Activated CD4-positive, alpha-beta T cell treated with anti-CD3 and anti-CD28 coated beads for 36 hours (primary cell): ENCODE measurements at regions of chr10 and their contacts with region 1.

Region 1: DNA sequence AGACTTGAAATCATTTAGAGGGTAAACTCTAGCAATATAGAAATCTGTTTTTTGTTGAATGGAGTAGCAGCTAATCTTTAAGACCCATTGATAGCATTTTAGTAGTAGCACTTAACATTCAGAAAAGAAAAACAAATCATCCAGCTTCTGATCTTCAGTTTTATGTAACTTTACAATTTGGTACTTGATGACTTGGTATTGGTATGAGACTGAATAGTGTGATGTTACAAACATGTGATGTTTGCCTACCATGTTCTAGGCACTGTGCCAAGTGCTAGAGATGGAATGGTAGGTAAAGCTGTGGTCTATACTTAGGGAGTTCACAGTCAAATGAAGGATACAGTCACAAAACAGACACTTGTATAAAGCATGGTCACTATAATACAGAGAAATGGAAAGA is 21.3 kb downstream of the ZEB1 start:
- DNase-seq: peak; percentile 52
- ATAC-seq: peak; percentile 45
- H3K4me3 Mint-ChIP-seq: no peak overlapping the region
- H3K27ac Mint-ChIP-seq: no peak overlapping the region
- H3K4me1 Mint-ChIP-seq: peaks cover 22% of the 10 kb centered on the region
- H3K27me3 Mint-ChIP-seq: no peaks in the 10 kb centered on the region

Region 2: GRCh38 chr10:30701451-30702173 is 638.7 kb before region 1 on chr10:
- CTCF ChIA-PET with region 1: interaction called, 3 read pairs
- POLR2A ChIA-PET with region 1: no interaction called
- intact Hi-C with region 1: loop called (anchors 5 to 10 kb)
- DNase-seq: peak; percentile 93
- ATAC-seq: peak; percentile 73
- H3K4me3 Mint-ChIP-seq: peak overlapping the region; percentile 86
- H3K27ac Mint-ChIP-seq: peak overlapping the region; percentile 90
- H3K4me1 Mint-ChIP-seq: peaks cover 87% of the 10 kb centered on the region
- H3K27me3 Mint-ChIP-seq: no peaks in the 10 kb centered on the region

Region 3: DNA sequence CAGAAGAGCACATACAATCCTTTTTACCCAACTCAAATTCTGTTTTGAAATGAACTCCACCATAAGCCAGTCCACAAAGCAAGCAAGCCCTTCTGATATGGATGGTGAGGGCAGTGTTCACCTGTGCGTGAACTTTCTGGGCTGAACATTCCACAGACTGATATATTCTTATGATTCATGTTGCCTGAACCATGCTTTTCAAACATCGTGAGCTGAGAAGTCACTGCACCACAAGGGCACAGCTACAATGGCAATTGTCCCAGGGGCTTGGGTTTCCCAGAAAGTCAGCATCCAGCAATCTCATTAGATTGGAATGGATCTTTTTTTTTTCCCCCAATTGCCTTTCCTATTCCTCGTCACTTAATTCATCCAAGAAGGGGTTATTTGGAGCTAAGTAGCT is 221.8 kb before region 1 on chr10:
- CTCF ChIA-PET with region 1: no interaction called
- POLR2A ChIA-PET with region 1: no interaction called
- intact Hi-C with region 1: no loop called
- DNase-seq: no peak
- ATAC-seq: no peak
- H3K4me3 Mint-ChIP-seq: no peak overlapping the region
- H3K27ac Mint-ChIP-seq: no peak overlapping the region
- H3K4me1 Mint-ChIP-seq: peaks cover 19% of the 10 kb centered on the region
- H3K27me3 Mint-ChIP-seq: peaks cover 2% of the 10 kb centered on the region

Region 4: DNA sequence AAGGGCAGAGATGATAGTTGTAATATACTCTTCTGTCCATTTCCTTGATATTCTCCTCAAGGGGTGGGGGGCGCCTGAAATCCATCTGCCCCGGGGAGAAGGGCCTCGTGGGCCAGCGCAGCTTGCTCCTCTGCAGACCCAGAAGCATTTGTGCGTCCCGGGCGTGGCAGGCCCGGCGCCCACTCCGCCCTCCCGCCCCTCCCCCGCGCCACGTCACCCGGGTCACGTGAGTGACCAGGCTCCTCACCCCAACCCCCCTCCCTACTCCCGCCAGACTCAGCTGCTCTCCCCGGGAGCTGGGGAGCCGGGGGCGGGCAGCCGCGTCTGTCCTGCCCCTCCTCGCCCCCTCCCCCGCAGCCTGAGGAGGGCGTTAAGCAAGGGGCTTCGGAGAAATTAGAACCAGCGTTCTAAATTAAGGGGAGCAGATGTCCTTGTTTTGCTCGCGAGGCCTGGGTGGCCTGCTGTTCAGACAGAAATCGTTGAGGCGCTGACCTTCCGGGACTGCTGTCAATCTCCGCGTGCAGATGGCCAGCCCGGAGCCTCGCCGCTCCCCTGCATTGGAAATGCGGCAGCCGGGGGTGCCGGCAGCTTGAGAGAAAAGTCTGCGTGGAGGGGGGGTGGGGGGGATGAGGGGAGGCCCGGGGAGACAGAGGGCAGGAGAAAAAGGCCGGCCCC is 206.6 kb before region 1 on chr10:
- CTCF ChIA-PET with region 1: no interaction called
- POLR2A ChIA-PET with region 1: no interaction called
- intact Hi-C with region 1: loop called in 1 of 2 experiments (anchors 10 kb)
- DNase-seq: peak; percentile 84
- ATAC-seq: peak; percentile 52
- H3K4me3 Mint-ChIP-seq: peak overlapping the region; percentile 75
- H3K27ac Mint-ChIP-seq: peak overlapping the region; percentile 55
- H3K4me1 Mint-ChIP-seq: peaks cover 42% of the 10 kb centered on the region
- H3K27me3 Mint-ChIP-seq: no peaks in the 10 kb centered on the region

Region 5: GRCh38 chr10:31393844-31394243 is 53.5 kb after region 1 on chr10:
- CTCF ChIA-PET with region 1: interaction called, 3 read pairs
- POLR2A ChIA-PET with region 1: no interaction called
- intact Hi-C with region 1: loop called in 1 of 2 experiments (anchors 5 kb)
- DNase-seq: no peak
- ATAC-seq: no peak
- H3K4me3 Mint-ChIP-seq: no peak overlapping the region
- H3K27ac Mint-ChIP-seq: no peak overlapping the region
- H3K4me1 Mint-ChIP-seq: peaks cover 36% of the 10 kb centered on the region
- H3K27me3 Mint-ChIP-seq: no peaks in the 10 kb centered on the region

Region 6: GRCh38 chr10:31479752-31480151 is 139.4 kb after region 1 on chr10:
- CTCF ChIA-PET with region 1: no interaction called
- POLR2A ChIA-PET with region 1: no interaction called
- intact Hi-C with region 1: no loop called
- DNase-seq: no peak
- ATAC-seq: no peak
- H3K4me3 Mint-ChIP-seq: no peak overlapping the region
- H3K27ac Mint-ChIP-seq: no peak overlapping the region
- H3K4me1 Mint-ChIP-seq: peaks cover 21% of the 10 kb centered on the region
- H3K27me3 Mint-ChIP-seq: no peaks in the 10 kb centered on the region

Region 7: GRCh38 chr10:31574577-31574976 is 234.2 kb after region 1 on chr10:
- CTCF ChIA-PET with region 1: no interaction called
- POLR2A ChIA-PET with region 1: no interaction called
- intact Hi-C with region 1: no loop called
- DNase-seq: no peak
- ATAC-seq: no peak
- H3K4me3 Mint-ChIP-seq: no peak overlapping the region
- H3K27ac Mint-ChIP-seq: no peak overlapping the region
- H3K4me1 Mint-ChIP-seq: peaks cover 8% of the 10 kb centered on the region
- H3K27me3 Mint-ChIP-seq: no peaks in the 10 kb centered on the region

Region 8: DNA sequence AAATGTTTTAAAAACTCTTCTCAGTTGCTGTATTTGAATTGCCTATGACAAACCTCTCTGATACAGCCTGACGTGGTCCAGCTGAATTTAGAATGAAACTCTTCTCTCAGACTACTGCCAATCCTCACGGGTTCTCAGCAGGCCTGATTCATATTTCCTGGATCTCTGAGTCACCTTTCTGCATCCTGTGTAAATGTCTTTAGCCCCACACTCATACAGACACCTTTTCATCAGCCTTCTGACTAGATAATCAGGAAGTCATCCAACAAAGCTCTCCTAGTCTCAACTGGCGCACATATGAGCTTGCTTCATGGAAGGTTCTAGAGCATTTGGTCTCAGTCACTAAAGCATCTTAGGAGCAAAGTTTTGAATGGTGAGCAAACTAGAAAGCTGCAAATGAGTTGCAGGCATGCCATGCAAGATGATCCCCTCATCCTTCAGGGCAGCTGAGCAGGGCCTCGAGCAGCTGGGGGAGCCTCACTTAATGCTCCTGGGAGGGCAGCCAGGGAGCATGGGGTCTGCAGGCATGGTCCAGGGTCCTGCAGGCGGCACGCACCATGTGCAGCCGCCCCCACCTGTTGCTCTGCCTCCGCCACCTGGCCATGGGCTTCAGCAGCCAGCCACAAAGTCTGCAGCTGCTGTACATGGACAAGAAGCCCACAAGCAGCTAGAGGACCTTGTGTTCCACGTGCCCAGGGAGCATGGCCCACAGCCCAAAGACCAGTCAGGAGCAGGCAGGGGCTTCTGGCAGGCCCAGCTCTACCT is 405.5 kb after region 1 on chr10:
- CTCF ChIA-PET with region 1: no interaction called
- POLR2A ChIA-PET with region 1: no interaction called
- intact Hi-C with region 1: loop called in 1 of 2 experiments (anchors 10 kb)
- DNase-seq: peak; percentile 75
- ATAC-seq: peak; percentile 98
- H3K4me3 Mint-ChIP-seq: no peak overlapping the region
- H3K27ac Mint-ChIP-seq: peak overlapping the region; percentile 91
- H3K4me1 Mint-ChIP-seq: peaks cover 34% of the 10 kb centered on the region
- H3K27me3 Mint-ChIP-seq: no peaks in the 10 kb centered on the region

Region 9: GRCh38 chr10:32332299-32332750 is 992.0 kb after region 1 on chr10:
- CTCF ChIA-PET with region 1: no interaction called
- POLR2A ChIA-PET with region 1: no interaction called
- intact Hi-C with region 1: loop called in 1 of 2 experiments (anchors 10 kb)
- DNase-seq: peak; percentile 87
- ATAC-seq: peak; percentile 95
- H3K4me3 Mint-ChIP-seq: peak overlapping the region; percentile 75
- H3K27ac Mint-ChIP-seq: peak overlapping the region; percentile 98
- H3K4me1 Mint-ChIP-seq: peaks cover 96% of the 10 kb centered on the region
- H3K27me3 Mint-ChIP-seq: no peaks in the 10 kb centered on the region